ENCODE measurements at regions of chr17 and their contacts with region 1.

Region 1: DNA sequence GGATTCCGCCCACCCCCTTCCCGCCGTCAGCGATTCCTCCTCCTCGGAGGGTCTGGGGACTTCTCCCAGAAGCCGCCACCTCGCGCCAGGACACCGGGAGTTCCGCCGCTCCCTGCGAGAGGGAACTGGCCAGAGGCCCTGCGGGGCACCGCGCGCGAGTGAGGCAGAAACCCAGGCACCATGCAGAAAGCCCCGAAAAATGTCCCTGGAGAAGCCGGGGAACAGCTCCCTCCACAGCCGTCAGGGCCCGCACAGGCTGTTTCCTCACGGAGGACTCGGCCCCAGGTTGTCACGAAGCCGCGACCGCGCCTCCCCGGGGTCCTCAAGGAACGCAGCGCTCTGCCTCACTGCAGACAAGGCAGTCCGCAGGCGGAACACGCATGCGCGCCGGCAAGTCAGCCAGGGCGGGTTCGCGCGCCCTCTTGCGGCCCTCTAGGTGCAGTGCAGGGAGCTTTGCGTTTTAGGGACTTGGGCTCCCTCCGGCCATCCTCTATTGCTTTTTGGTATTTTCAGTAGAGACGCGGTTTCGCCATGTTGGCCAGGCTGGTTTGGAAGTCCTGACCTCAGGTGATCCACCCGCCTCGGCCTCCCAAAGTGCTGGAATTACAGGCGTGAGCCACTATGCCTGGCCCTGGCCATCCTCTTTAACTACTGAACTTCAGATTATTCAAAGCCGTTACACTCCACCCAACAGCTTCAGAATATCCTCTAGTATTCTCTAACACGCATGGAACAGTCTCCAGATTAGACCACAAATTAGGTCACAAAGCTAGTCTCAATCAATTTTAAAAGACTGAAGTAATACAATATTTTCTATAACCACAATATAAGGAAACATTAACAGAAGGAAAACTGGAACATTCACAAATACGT is 20.3 kb upstream of the ZNF287 start:
- DNase-seq: peak; percentile 98
- H3K4me3 Mint-ChIP-seq: peak overlapping the region; percentile 72
- H3K27ac Mint-ChIP-seq: no peak overlapping the region
- H3K4me1 Mint-ChIP-seq: peaks cover 6% of the 10 kb centered on the region
- H3K27me3 Mint-ChIP-seq: peaks cover 41% of the 10 kb centered on the region

Region 2: GRCh38 chr17:16568541-16569357 is 20.6 kb before region 1 on chr17 and contains the start of gene ZNF287:
- intact Hi-C with region 1: loop called (anchors 2 kb)
- DNase-seq: peak; percentile 97
- H3K4me3 Mint-ChIP-seq: peak within 1 kb of the TSS; percentile 84
- H3K27ac Mint-ChIP-seq: peak within 1 kb of the TSS; percentile 73
- H3K4me1 Mint-ChIP-seq: peaks cover 9% of the 10 kb centered on the region
- H3K27me3 Mint-ChIP-seq: peaks cover 5% of the 10 kb centered on the region
- total RNA-seq, gene ZNF287: 5.2 and 6.3 TPM in 2 replicates

Region 3: DNA sequence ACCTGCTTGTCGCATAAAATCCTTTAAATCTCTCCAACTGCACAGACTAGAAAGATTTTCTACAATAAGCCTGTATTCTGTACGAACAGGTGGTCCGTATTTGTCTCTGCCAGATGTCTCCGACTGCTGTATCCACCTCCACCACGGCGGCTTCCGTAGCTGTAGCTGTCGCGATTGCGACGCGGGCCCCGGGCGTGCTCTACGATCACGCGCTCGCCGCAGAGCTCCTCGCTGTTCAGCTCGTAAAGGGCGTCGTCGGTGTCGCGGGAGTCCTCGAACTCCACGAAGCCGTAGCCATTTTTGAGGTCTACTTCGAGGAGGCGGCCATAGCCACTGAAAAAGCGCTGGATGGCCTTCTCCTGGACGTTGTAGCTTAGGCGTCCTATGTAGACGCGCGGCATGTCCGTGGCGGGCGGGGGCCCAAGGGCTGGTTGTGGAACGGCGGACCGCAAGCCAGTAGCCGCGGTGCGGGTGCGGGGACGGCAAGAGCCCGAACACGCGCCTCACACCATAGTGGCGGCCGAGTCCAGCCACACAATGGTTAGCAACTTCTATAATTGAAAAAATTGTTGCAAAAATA is 28.2 kb after region 1 on chr17:
- intact Hi-C with region 1: no loop called
- DNase-seq: no peak
- H3K4me3 Mint-ChIP-seq: no peak overlapping the region
- H3K27ac Mint-ChIP-seq: no peak overlapping the region
- H3K4me1 Mint-ChIP-seq: no peaks in the 10 kb centered on the region
- H3K27me3 Mint-ChIP-seq: no peaks in the 10 kb centered on the region

Region 4: GRCh38 chr17:16653209-16654041 is 64.1 kb after region 1 on chr17 and contains the start of gene ZNF624:
- intact Hi-C with region 1: loop called (anchors 5 kb)
- DNase-seq: peak; percentile 96
- H3K4me3 Mint-ChIP-seq: peak within 1 kb of the TSS; percentile 89
- H3K27ac Mint-ChIP-seq: peak within 1 kb of the TSS; percentile 61
- H3K4me1 Mint-ChIP-seq: peaks cover 12% of the 10 kb centered on the region
- H3K27me3 Mint-ChIP-seq: peaks cover 9% of the 10 kb centered on the region
- total RNA-seq, gene ZNF624: 2.9 and 3.4 TPM in 2 replicates